RWPE1 (cell line): ENCODE measurements at regions of chr16 and their contacts with region 1.

Region 1: GRCh38 chr16:2278272-2278608 is 10.3 kb upstream of the RNPS1 start:
- DNase-seq: no peak
- H3K27ac ChIP-seq: no peak overlapping the region
- CTCF ChIP-seq: no peak

Region 2: GRCh38 chr16:2223375-2224182 is 54.7 kb before region 1 on chr16 and contains the start of gene E4F1:
- CTCF ChIA-PET with region 1: no interaction called
- POLR2A ChIA-PET with region 1: no interaction called
- DNase-seq: peak; percentile 98
- H3K27ac ChIP-seq: peak within 1 kb of the TSS; percentile 90
- CTCF ChIP-seq: 0 out of 2 replicates have a peak, but pooled peaks have one; percentile 24

Region 3: GRCh38 chr16:2415085-2415484 is 136.8 kb after region 1 on chr16:
- CTCF ChIA-PET with region 1: no interaction called
- POLR2A ChIA-PET with region 1: interaction called, 10 read pairs
- DNase-seq: no peak
- H3K27ac ChIP-seq: no peak overlapping the region
- CTCF ChIP-seq: no peak